Activated naive CD4-positive, alpha-beta T cell treated with anti-CD3 and anti-CD28 coated beads, Interleukin-2, amount 10 ng/mL, durations not matched to agents 7 days and 5 days (primary cell): ENCODE measurements at regions of chr5 and their contacts with region 1.

Region 1: DNA sequence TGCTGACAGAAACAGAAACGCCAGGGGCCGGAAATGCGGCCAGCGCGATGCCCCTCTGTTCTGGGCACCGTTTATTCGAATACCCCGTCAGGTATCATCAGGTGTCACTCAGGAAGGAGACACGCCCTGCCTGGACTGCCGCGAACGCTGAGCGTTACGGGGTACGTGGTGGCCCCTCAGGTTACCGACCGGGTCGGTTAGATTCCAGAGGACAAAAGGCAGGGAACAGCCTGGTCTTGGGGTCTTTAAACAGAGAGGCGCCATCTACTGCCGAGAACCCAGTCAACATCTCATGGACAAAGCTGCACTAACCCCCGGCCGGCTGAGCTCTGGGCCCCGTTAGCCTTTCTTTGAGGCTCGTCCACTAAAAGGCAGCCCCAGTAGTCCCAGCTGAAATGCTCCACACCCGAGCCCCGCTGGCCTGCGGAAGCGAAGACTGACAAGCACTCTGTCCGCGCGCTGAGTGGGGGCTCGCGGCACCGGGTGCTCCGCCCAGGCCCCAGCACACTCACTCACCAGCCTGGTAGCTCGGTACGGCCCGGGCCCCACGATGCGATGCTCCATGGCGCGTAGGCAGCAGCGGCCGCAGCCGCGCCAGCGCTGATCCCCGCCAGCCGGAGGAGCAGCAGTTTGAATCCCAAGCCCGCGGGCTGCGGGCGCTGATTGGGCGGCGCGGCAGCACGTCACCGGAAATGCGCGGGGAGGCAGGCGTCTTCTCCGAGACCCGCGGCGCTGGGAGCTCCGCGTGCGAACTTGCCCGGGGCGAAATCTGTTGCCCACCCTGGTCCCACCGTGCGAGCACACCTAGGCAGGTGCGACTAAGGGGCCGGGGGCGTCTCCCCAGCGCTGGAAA is at the start of gene DEPDC1B:
- DNase-seq: peak; percentile 92
- H3K4me3 Mint-ChIP-seq: peak within 1 kb of the TSS; percentile 91
- H3K27ac Mint-ChIP-seq: peak within 1 kb of the TSS; percentile 93
- H3K4me1 Mint-ChIP-seq: peaks cover 39% of the 10 kb centered on the region
- H3K27me3 Mint-ChIP-seq: peaks cover 23% of the 10 kb centered on the region

Region 2: GRCh38 chr5:60687927-60688720 is 11.6 kb before region 1 on chr5:
- CTCF ChIA-PET with region 1: interaction called, 16 read pairs
- DNase-seq: no peak
- H3K4me3 Mint-ChIP-seq: no peak overlapping the region
- H3K27ac Mint-ChIP-seq: no peak overlapping the region
- H3K4me1 Mint-ChIP-seq: peaks cover 2% of the 10 kb centered on the region
- H3K27me3 Mint-ChIP-seq: no peaks in the 10 kb centered on the region